ENCODE measurements at regions of chr3 and their contacts with region 1.

Region 1: DNA sequence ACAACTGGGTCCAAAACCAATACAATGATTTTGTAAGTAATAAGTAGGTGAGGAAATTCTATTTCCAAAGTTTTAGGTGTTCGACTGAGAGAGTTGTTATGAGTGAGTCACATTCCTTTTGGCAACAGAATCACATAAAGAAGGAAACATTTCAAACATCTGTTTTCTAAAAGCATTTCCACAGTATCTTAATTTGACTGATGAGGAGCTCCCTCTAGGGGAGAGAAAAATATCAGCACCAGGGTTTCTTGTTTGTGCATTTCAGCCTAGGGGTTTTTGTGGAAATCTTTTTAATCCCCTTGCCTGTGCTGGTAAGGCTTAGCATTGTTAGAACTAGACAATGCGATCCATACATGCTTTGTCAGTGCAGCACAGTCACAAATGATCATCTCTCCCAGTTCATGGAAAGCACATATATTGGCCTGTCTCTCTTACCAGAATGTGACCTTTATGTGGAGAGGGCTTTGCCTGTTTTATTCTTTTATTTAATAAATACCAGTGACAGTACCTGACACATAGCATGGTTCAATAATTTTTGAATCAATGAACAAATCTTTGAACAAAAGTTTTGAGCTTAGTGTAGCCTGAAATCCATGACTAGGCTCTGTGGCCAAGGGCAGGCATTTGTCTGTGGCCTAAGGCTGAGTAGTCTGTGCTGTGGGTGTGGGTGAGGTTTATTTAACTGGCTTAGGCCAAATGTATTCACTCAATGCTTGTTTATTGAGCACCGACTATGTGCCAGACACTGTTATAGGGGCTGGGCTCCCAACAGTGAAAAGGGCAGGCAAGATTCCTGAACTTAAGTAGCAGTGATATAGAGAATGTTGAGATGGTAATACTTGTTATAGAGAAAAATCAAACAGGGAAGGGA is 21.1 kb upstream of the IQCF6 start:
- DNase-seq: peak; percentile 33
- H3K4me3 Mint-ChIP-seq: no peak overlapping the region
- H3K27ac Mint-ChIP-seq: no peak overlapping the region
- H3K4me1 Mint-ChIP-seq: peaks cover 42% of the 10 kb centered on the region
- H3K27me3 Mint-ChIP-seq: peaks cover 13% of the 10 kb centered on the region

Region 2: DNA sequence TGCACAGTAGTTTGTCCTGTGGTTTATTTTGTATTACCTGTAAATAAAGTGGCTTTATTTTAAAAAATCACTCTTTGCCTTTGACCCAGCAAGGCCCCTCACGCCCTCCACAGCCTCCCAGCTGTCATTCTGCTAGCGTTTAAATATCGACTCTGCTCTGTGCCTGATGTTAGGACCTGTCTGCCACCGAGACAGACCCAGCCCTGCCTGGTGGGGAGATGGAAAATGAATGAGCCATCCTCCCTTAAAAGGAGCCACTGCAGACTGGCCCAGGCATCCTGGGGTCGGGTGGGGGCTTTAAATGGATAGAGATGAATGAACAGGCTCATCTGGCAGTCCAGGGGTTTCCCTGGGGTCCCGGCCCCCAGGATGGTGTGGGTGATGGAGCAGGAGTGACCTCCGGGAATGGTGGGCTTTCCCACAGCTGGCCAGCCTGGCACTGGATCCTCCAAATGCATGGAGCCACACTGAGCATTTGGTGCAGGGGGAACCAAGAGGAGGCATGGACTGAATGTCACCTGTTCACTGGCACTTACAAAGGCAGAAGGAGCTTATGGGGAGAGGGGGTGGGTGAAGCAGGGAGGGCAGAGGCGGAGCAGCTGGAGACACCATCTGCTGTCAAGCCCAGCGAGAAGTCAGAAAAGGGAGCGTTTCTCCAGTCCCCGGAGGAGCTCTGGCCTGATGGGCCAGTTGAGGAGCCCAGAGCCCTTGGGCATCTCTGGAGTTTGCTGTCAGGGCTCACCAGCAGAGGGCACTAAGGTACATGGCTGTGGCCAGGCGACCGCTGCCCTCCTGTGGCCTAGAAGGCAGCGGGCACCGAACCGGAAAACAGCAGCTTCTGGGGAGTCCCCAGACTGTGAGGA is 81.3 kb before region 1 on chr3:
- CTCF ChIA-PET with region 1: interaction called, 53 read pairs
- DNase-seq: peak; percentile 85
- H3K4me3 Mint-ChIP-seq: no peak overlapping the region
- H3K27ac Mint-ChIP-seq: peak overlapping the region; percentile 26
- H3K4me1 Mint-ChIP-seq: peaks cover 36% of the 10 kb centered on the region
- H3K27me3 Mint-ChIP-seq: no peaks in the 10 kb centered on the region

Region 3: DNA sequence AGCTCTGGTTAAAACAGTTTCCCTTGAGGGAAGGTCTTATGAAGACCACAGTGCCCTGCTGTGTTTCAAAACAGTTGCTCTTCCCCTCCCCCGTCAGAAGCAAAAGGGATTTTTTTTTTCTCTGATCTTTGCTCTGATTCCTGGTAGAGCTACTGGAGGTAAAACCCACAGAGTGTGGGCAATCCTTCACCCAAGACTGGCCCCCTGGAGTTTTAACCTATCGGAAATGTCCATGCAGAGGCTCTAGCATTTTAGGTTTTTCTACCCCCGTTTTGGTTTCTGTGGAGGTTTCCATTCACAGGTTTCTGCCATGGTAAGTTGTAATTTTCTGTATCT is 65.6 kb before region 1 on chr3:
- CTCF ChIA-PET with region 1: interaction called, 13 read pairs
- DNase-seq: peak; percentile 37
- H3K4me3 Mint-ChIP-seq: peak overlapping the region; percentile 37
- H3K27ac Mint-ChIP-seq: peak overlapping the region; percentile 60
- H3K4me1 Mint-ChIP-seq: peaks cover 15% of the 10 kb centered on the region
- H3K27me3 Mint-ChIP-seq: peaks cover 22% of the 10 kb centered on the region

Region 4: DNA sequence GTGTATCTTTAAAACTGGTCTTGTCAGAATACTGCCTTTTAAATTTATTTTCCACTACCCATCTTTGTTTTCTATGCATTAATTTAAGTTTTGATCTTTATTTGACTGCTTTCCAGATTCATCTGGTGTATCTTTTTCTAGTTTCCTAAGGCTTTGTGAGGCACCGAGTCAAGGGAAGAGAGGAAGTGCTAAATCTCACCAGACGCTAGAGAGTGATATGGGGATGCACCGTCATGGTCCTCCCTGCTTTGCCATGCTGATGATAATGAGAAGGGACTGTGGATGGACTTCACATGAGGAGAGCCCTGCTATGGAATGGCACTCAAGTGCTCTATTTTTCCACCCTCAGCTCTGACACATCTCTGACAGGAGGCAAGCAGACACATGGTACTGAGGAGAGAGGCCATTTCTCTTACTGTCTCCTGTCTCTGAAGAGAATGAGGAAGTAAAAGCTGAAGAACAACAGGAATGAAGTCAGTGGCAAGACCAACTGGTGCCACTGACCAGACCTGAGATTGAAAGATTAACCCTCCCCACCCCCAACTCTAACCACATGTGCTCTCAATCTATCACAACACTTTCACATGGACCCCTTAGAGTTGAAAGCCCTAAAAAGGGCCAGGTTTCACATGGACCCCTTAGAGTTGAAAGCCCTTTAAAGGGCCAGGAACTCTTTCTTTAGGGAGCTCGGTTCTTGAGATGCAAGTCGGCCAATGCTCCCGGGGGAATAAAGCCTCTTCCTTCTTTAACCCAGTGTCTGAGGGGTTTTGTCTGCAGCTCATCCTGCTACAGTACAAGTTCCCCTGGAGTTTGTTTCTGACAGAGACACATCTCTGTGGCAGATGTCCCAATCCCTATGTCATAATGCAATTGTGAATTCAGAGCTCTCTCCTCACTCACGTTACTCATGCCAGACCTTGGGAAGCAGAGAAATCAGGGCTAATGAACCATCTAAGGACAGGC is 60.9 kb after region 1 on chr3 and contains the start of gene IQCF2:
- CTCF ChIA-PET with region 1: no interaction called
- DNase-seq: no peak
- H3K4me3 Mint-ChIP-seq: no peak within 1 kb of the TSS
- H3K27ac Mint-ChIP-seq: no peak within 1 kb of the TSS
- H3K4me1 Mint-ChIP-seq: peaks cover 5% of the 10 kb centered on the region
- H3K27me3 Mint-ChIP-seq: peaks cover 17% of the 10 kb centered on the region

Region 5: DNA sequence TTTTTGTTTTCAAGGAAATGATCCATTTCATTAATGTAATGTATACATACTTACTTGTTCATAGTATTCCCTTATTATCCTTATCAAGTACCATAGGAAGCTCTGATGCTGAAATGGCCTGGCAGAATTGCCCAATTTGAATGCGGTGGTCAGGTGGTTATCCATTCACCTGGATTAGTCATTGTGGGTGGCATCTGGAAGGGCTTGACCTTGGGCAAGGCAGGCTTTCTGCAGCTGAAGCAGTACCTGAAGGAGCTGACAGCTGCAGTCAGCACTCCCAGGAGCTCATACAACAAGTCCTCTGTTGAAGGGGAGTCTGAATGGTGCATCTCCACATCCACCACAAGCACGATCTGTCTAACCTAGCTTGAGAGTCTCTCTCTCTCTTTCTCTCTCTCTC is 87.5 kb after region 1 on chr3:
- CTCF ChIA-PET with region 1: no interaction called
- DNase-seq: no peak
- H3K4me3 Mint-ChIP-seq: no peak overlapping the region
- H3K27ac Mint-ChIP-seq: no peak overlapping the region
- H3K4me1 Mint-ChIP-seq: peaks cover 11% of the 10 kb centered on the region
- H3K27me3 Mint-ChIP-seq: peaks cover 36% of the 10 kb centered on the region